Body of pancreas (tissue), 4 donors: ENCODE measurements at regions of chr1 and their contacts with region 1.

Region 1: DNA sequence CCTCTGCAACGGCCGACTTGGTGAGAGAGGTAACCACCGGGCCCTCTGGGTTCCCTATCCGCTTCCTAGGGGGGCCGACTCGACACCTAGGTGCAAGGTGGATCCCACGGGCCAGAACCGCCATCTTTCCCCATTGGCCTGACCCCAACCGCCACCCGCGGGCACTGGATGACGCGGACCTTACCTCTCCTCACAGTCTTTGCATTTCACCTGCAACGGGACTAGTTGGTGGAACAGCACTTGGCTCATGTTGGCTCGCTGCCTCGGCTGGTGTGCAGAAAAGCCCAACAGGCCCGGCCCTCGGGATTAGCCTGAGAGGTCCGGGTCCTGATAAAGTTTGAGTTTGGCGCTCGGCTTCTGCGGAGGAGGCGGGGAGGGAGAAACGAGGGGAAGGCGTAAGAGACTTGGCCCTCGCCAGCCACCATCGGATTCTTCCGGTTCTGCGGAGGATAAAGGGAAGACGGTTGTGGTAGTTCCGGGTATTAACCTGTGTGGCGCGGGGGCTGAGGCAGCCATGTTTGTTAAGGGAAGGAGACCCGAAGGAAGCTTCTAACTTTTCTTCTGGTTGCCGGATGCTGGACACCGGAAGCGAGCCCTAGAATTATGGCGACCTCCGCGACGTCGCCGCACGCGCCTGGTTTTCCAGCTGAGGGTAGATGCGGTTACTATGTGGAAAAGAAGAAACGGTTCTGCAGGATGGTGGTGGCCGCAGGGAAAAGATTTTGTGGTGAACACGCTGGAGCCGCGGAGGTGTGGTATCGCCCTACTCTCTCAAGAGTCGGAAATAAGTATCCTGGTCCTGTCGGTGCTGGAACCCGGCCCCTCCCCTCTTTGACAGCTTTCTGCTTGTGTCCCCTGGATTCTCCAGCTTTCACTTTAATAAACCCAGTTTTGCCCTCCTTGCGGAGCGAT is at the starts of genes SASS6 and TRMT13:
- DNase-seq: peak; percentile 94 to 98 (median 96)
- ATAC-seq: peak; percentile 99
- H3K4me3 ChIP-seq: peak within 1 kb of the TSS; percentile 61 to 88
- H3K27ac ChIP-seq: peak within 1 kb of the TSS in 3 of 4 donors; percentile 55 to 78 (median 71)
- H3K4me1 ChIP-seq: peaks cover 23% of the 10 kb centered on the region
- H3K27me3 ChIP-seq: no peaks in the 10 kb centered on the region
- CTCF ChIP-seq: peak in 3 of 7 experiments; percentile 21 to 41 (median 36)
- POLR2A ChIP-seq: peak in 2 of 3 donors; percentile 56 to 63
- total RNA-seq, gene SASS6: 1.6 to 2.1 TPM
- total RNA-seq, gene TRMT13: 33.7 to 33.9 TPM

Region 2: GRCh38 chr1:100277866-100278265 is 145.0 kb after region 1 on chr1:
- intact Hi-C with region 1: loop called (anchors 10 kb)
- DNase-seq: no peak
- ATAC-seq: no peak
- H3K4me3 ChIP-seq: no peak overlapping the region
- H3K27ac ChIP-seq: no peak overlapping the region
- H3K4me1 ChIP-seq: peaks cover 7% of the 10 kb centered on the region
- H3K27me3 ChIP-seq: no peaks in the 10 kb centered on the region
- CTCF ChIP-seq: no peak
- POLR2A ChIP-seq: no peak